Lower lobe of right lung (tissue), 2 donors: ENCODE measurements at regions of chr4 and their contacts with region 1.

Region 1: GRCh38 chr4:82739316-82740179 is 59.0 kb downstream of the SCD5 start:
- DNase-seq: peak; percentile 80
- ATAC-seq: peak; percentile 94 to 96
- H3K4me3 ChIP-seq: no peak overlapping the region
- H3K27ac ChIP-seq: no peak overlapping the region
- H3K4me1 ChIP-seq: no peaks in the 10 kb centered on the region
- H3K27me3 ChIP-seq: no peaks in the 10 kb centered on the region
- CTCF ChIP-seq: peak; percentile 94

Region 2: DNA sequence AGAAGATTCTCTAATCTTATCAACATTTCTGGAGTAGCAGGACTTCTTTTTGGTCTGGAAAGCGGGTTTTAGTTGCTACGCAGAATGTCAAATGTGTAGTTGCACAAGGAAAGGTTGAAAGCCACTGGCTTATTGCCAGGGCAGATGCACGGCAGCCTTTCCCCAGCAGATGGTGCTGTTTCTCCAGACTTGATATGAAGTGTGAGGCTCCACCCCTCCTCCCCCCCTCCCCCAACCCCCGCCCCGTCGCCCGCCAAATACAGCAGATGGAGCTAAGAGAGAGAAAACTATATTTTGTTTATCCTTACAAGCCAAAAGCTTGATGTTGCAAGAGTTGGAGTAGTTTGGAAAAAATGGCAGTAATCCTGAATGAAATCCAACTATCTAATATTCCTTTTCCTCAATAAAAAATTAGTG is 277.1 kb before region 1 on chr4:
- intact Hi-C with region 1: loop called (anchors 10 kb)
- DNase-seq: peak; percentile 77
- ATAC-seq: peak; percentile 89 to 91
- H3K4me3 ChIP-seq: no peak overlapping the region
- H3K27ac ChIP-seq: no peak overlapping the region
- H3K4me1 ChIP-seq: peaks cover 5% of the 10 kb centered on the region
- H3K27me3 ChIP-seq: no peaks in the 10 kb centered on the region
- CTCF ChIP-seq: peak; percentile 87

Region 3: GRCh38 chr4:82921795-82922194 is 182.2 kb after region 1 on chr4:
- intact Hi-C with region 1: no loop called
- DNase-seq: no peak
- ATAC-seq: no peak
- H3K4me3 ChIP-seq: no peak overlapping the region
- H3K27ac ChIP-seq: no peak overlapping the region
- H3K4me1 ChIP-seq: no peaks in the 10 kb centered on the region
- H3K27me3 ChIP-seq: no peaks in the 10 kb centered on the region
- CTCF ChIP-seq: no peak

Region 4: DNA sequence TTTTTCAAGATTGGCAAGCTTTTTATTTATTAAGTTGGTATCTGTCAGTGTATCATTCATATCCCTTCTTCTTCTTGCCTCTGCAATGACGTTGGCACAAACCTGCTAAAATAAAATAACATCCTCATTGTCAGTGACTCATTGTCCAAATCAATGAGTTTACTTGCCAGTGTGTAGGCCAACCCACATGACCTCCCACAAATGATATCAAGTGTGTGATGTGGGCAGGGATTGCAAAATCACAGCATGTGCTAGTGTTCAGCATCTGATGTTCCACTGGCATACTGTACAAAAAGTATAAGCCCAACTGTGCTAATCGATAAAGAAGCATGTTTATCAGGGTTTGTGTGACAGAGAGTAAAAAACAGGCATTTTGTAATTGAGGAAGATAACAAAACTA is 821.8 kb after region 1 on chr4:
- intact Hi-C with region 1: no loop called
- DNase-seq: no peak
- ATAC-seq: peak; percentile 70 to 79
- H3K4me3 ChIP-seq: no peak overlapping the region
- H3K27ac ChIP-seq: no peak overlapping the region
- H3K4me1 ChIP-seq: peaks cover 8% of the 10 kb centered on the region
- H3K27me3 ChIP-seq: no peaks in the 10 kb centered on the region
- CTCF ChIP-seq: no peak